ENCODE measurements at regions of chr3 and their contacts with region 1.

Region 1: GRCh38 chr3:149566292-149566975 is 91.4 kb downstream of the WWTR1 start:
- DNase-seq: no peak
- H3K4me3 ChIP-seq: no peak overlapping the region
- H3K27ac ChIP-seq: no peak overlapping the region
- H3K4me1 ChIP-seq: no peaks in the 10 kb centered on the region
- H3K27me3 ChIP-seq: peaks cover 0 to 2% (median 0%) of the 10 kb centered on the region in 5 experiments

Region 2: DNA sequence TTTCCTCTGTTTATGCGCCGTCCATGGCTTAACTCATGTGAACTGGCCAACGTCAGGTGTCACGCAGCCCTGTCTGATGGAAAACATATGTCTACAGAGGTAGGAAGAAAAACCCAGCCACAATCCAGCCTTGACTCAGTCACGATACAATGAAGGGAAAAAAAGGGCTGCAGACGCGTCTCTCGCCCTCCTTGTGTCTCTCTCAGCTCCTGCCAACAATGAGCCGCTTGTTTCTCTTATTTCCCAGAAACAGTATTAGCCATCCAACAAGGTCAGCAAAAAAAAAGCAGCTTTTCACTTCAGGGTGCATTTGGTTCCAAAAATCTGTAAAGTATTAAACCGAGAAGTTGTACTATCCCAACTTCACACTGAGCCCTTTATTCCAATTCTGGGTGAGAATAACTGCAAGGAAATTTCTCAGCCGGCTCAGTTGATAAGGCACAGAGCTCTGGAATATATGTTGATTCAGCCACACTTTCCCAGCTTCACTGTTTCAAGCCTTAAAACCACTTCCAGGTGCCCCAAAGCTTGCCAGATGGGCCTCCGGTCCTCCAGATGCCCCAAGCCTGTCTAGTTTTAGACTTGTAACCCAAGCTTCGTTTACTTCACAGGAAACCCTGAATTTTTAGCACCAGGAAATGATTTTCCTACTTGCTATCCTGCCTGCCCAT is 12.5 kb before region 1 on chr3:
- CTCF ChIA-PET with region 1: interaction called, 17 read pairs
- POLR2A ChIA-PET with region 1: no interaction called
- DNase-seq: no peak
- H3K4me3 ChIP-seq: no peak overlapping the region
- H3K27ac ChIP-seq: no peak overlapping the region
- H3K4me1 ChIP-seq: peaks cover 0 to 6% (median 3%) of the 10 kb centered on the region in 4 experiments
- H3K27me3 ChIP-seq: no peaks in the 10 kb centered on the region

Region 3: DNA sequence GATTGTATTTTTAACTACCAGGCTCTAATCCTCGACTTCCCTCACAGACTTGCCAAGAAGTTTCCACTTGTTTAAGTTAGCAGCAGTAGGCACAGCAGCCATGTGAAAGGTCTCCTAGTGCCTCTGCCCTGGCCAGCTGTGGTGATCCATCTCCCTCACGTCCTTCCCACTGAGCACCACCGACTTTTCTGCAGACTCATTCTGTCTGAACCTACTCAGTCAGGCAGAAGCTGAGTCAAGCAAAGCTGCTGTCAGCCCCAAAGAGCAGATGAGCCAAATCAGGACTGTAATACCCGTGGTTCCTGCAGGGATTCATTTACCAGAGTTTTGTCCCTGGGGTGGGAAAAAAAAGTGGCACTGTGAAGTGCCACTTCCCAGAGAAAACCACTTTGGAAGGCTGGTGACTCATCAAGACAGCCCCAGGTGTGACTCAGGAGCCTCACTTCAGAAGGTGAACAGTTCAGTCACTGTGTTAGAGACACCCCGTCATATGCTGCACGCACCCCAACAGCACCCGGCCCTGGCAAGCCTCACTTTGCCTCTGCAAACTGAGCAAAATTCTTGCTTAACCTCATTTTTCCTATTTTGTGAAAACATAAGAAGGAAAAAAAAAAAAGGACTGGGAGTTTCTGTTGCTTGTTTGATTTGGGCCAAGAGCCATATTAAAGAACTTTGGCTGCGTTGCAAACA is 15.4 kb after region 1 on chr3:
- CTCF ChIA-PET with region 1: interaction called, 30 read pairs
- POLR2A ChIA-PET with region 1: no interaction called
- DNase-seq: peak; percentile 7 to 61 (median 51)
- H3K4me3 ChIP-seq: no peak overlapping the region
- H3K27ac ChIP-seq: no peak overlapping the region
- H3K4me1 ChIP-seq: peaks cover 0 to 4% (median 0%) of the 10 kb centered on the region in 4 experiments
- H3K27me3 ChIP-seq: peaks cover 0 to 2% (median 2%) of the 10 kb centered on the region in 5 experiments

Measured in common myeloid progenitor, CD34-positive (primary cell).